Endothelial cell of umbilical vein (primary cell): ENCODE measurements at regions of chr3 and their contacts with region 1.

Region 1: GRCh38 chr3:110593749-110594148 is 477.9 kb upstream of the NECTIN3 start:
- DNase-seq: no peak
- H3K4me3 ChIP-seq: no peak overlapping the region
- H3K27ac ChIP-seq: no peak overlapping the region
- H3K4me1 ChIP-seq: no peaks in the 10 kb centered on the region
- H3K27me3 ChIP-seq: no peaks in the 10 kb centered on the region
- CTCF ChIP-seq: no peak
- POLR2A ChIP-seq: no peak

Region 2: DNA sequence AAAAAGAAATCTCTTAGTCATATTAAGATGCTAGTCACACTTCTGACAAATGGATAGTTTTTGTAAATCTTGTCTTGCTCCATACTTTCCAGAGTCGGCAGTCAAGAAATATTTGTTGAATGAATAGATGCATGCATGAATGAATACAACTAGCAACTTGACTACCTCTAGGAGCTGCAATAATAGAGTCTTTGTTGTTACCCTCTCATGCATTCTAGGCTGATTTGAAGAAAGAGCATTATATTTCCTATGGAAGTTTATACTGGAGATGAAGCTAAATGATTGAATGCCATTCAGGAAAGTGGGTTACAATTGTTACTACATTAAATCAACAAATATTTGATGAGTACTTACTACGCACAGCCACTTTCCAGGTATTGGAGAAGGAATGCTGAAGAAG is 1789.3 kb before region 1 on chr3:
- CTCF ChIA-PET with region 1: no interaction called
- POLR2A ChIA-PET with region 1: no interaction called
- dilution Hi-C with region 1: no loop called
- intact Hi-C with region 1: loop called (anchors 5 kb)
- DNase-seq: no peak
- H3K4me3 ChIP-seq: no peak overlapping the region
- H3K27ac ChIP-seq: no peak overlapping the region
- H3K4me1 ChIP-seq: no peaks in the 10 kb centered on the region
- H3K27me3 ChIP-seq: no peaks in the 10 kb centered on the region
- CTCF ChIP-seq: no peak
- POLR2A ChIP-seq: no peak

Region 3: DNA sequence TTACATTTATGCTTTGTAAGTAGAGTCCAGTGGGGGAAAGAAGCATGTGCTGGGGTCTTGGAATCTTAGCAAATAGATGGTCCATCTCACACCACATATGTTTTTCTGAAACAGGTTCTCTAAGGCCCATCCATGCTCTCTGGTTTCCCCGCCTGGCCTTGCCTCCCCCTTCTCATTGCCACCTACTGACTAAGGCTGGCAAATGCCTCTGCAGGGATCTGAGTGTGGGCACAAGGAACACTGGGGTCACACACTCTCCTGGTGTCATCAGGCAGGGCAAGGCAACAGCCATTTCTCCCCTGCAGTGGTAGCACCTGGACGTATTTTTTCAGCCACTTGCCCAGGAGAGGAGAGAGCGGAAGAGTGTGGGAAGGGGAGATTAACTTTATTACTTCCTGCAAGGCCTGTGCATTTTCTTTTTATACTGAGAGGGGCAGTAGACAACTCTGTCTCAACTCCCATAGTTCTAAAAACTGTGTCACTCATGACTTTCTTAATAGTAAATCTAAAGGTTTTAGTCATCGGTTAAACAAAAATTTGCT is 326.4 kb before region 1 on chr3:
- CTCF ChIA-PET with region 1: no interaction called
- POLR2A ChIA-PET with region 1: no interaction called
- dilution Hi-C with region 1: no loop called
- intact Hi-C with region 1: no loop called
- DNase-seq: no peak
- H3K4me3 ChIP-seq: no peak overlapping the region
- H3K27ac ChIP-seq: no peak overlapping the region
- H3K4me1 ChIP-seq: no peaks in the 10 kb centered on the region
- H3K27me3 ChIP-seq: no peaks in the 10 kb centered on the region
- CTCF ChIP-seq: no peak
- POLR2A ChIP-seq: no peak

Region 4: DNA sequence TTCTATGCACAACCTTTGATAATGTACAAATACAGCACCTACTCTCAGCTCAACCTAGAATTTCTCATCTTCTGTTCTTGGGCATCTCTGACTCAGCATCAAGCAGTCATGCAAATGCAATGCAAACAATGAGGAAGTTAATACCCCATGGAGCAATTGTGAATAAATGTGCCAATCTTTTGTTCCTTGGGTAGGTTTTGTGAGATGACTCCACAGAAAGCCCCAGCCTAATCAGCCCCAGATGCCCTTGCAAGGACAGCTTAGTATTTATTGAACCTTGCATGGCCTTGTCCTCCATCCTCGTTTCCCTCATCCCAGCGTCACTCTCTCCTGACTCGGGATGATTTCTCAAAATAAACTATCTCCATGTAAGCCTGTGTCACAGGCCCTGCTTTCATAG is 16.8 kb before region 1 on chr3:
- CTCF ChIA-PET with region 1: no interaction called
- POLR2A ChIA-PET with region 1: no interaction called
- dilution Hi-C with region 1: no loop called
- intact Hi-C with region 1: no loop called
- DNase-seq: peak; percentile 65
- H3K4me3 ChIP-seq: no peak overlapping the region
- H3K27ac ChIP-seq: peak overlapping the region; percentile 60
- H3K4me1 ChIP-seq: peaks cover 11% of the 10 kb centered on the region
- H3K27me3 ChIP-seq: no peaks in the 10 kb centered on the region
- CTCF ChIP-seq: no peak
- POLR2A ChIP-seq: no peak

Region 5: GRCh38 chr3:110608566-110608965 is 14.8 kb after region 1 on chr3:
- CTCF ChIA-PET with region 1: no interaction called
- POLR2A ChIA-PET with region 1: no interaction called
- dilution Hi-C with region 1: no loop called
- intact Hi-C with region 1: no loop called
- DNase-seq: peak; percentile 14
- H3K4me3 ChIP-seq: no peak overlapping the region
- H3K27ac ChIP-seq: no peak overlapping the region
- H3K4me1 ChIP-seq: peaks cover 2% of the 10 kb centered on the region
- H3K27me3 ChIP-seq: no peaks in the 10 kb centered on the region
- CTCF ChIP-seq: no peak
- POLR2A ChIP-seq: no peak